ENCODE measurements at regions of chr9 and their contacts with region 1.

Region 1: DNA sequence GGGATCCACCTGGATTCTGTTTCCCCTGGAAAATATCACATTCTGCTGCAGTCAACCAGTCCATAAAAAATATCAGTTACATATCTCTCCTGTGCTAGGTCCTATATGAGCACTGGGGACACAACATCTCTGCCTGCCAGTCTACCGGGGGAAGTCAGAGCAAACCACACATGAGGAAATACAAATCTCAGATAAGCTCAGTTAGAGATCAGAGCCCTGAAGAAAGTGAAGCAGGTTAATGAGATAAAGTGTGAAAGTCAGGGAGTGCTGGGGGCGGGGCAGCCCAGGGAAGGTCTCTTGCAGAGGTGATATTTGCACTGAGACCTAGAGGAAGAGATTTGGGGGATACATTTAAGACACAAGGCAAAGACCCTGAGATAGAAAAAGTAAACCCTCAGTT is 67.8 kb upstream of the SLC1A1 start:
- DNase-seq: no peak

Region 2: DNA sequence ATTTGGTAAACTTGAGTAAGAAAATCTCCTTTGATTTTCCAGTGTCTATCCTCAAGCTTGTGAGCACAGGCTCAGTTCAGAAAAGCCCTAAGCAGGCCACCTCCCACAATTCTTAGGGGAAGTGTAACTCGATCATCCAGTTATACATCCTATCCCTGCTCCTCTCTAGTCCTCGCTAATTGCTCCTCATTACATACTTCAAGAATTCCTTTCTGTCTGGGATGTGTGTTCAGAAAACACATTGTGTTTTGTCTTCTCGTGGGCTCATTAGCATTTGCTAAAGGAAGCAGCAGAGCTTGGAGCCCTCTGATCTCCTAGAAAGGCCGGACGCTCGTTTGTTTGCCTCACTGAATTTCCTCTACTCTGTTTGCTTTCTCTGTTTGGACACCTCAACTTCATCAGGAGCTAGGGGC is 628.5 kb before region 1 on chr9:
- intact Hi-C with region 1: loop called in 1 of 2 experiments (anchors 5 kb)
- DNase-seq: no peak

Region 3: GRCh38 chr9:4443439-4443838 is 20.9 kb after region 1 on chr9:
- intact Hi-C with region 1: no loop called
- DNase-seq: no peak

Measured in posterior vena cava (tissue), 2 donors.